Activated CD4-positive, alpha-beta memory T cell treated with anti-CD3 and anti-CD28 coated beads for 36 hours (primary cell): ENCODE measurements at regions of chr5 and their contacts with region 1.

Region 1: DNA sequence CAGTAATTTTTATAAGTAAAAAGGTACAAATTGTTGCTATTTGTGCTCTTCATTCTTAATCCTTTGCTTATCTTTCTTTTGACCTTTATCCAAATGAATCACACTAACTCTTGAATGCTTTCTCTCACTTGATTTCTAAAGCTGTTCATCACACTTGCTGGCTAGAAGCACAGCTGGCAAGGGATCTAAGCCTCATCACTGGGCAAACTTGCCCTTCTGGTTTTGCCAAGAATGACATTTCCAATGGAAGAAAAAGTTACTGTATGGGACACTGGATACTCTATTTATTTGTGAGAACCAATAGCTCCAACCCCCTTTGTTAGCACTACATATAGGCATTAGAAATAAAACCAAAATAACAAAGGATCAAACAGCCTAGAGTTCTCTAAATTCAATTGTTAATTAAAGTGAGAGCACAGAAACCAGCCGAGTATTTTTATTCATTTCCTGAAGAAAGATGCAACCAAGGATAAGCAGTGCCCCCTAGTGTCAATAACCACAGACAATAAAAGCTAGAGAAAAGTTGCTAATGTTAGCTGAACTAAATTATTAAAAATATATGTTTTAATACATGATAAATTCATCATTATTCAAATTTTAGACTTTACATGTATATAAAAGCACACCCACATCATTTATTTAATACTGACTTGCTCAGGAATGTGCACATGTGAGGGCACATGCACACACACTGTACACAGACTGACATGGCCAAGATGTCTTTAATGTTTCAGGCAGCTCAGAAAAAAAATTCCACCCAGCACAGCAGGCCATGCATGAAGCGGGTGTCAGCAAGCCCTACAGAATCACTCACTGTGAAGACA is 59.8 kb upstream of the POU5F2 start:
- DNase-seq: no peak
- H3K4me3 Mint-ChIP-seq: no peak overlapping the region
- H3K27ac Mint-ChIP-seq: no peak overlapping the region
- H3K4me1 Mint-ChIP-seq: no peaks in the 10 kb centered on the region
- H3K27me3 Mint-ChIP-seq: no peaks in the 10 kb centered on the region

Region 2: GRCh38 chr5:91928754-91929521 is 1872.3 kb before region 1 on chr5:
- CTCF ChIA-PET with region 1: no interaction called
- POLR2A ChIA-PET with region 1: no interaction called
- intact Hi-C with region 1: loop called (anchors 5 kb)
- DNase-seq: no peak
- H3K4me3 Mint-ChIP-seq: no peak overlapping the region
- H3K27ac Mint-ChIP-seq: no peak overlapping the region
- H3K4me1 Mint-ChIP-seq: no peaks in the 10 kb centered on the region
- H3K27me3 Mint-ChIP-seq: no peaks in the 10 kb centered on the region

Region 3: GRCh38 chr5:93607367-93608258 is 193.6 kb before region 1 on chr5:
- CTCF ChIA-PET with region 1: interaction called, 37 read pairs
- POLR2A ChIA-PET with region 1: no interaction called
- intact Hi-C with region 1: loop called (anchors 1 kb)
- DNase-seq: no peak
- H3K4me3 Mint-ChIP-seq: peak overlapping the region; percentile 8
- H3K27ac Mint-ChIP-seq: no peak overlapping the region
- H3K4me1 Mint-ChIP-seq: peaks cover 18% of the 10 kb centered on the region
- H3K27me3 Mint-ChIP-seq: peaks cover 82% of the 10 kb centered on the region

Region 4: GRCh38 chr5:93620487-93621326 is 180.5 kb before region 1 on chr5:
- CTCF ChIA-PET with region 1: interaction called, 7 read pairs
- POLR2A ChIA-PET with region 1: no interaction called
- intact Hi-C with region 1: loop called (anchors 5 kb)
- DNase-seq: peak; percentile 67
- H3K4me3 Mint-ChIP-seq: peak overlapping the region; percentile 81
- H3K27ac Mint-ChIP-seq: peak overlapping the region; percentile 15
- H3K4me1 Mint-ChIP-seq: peaks cover 32% of the 10 kb centered on the region
- H3K27me3 Mint-ChIP-seq: peaks cover 19% of the 10 kb centered on the region

Region 5: GRCh38 chr5:93746406-93747056 is 54.7 kb before region 1 on chr5:
- CTCF ChIA-PET with region 1: no interaction called
- POLR2A ChIA-PET with region 1: no interaction called
- intact Hi-C with region 1: no loop called
- DNase-seq: no peak
- H3K4me3 Mint-ChIP-seq: no peak overlapping the region
- H3K27ac Mint-ChIP-seq: no peak overlapping the region
- H3K4me1 Mint-ChIP-seq: peaks cover 4% of the 10 kb centered on the region
- H3K27me3 Mint-ChIP-seq: no peaks in the 10 kb centered on the region

Region 6: DNA sequence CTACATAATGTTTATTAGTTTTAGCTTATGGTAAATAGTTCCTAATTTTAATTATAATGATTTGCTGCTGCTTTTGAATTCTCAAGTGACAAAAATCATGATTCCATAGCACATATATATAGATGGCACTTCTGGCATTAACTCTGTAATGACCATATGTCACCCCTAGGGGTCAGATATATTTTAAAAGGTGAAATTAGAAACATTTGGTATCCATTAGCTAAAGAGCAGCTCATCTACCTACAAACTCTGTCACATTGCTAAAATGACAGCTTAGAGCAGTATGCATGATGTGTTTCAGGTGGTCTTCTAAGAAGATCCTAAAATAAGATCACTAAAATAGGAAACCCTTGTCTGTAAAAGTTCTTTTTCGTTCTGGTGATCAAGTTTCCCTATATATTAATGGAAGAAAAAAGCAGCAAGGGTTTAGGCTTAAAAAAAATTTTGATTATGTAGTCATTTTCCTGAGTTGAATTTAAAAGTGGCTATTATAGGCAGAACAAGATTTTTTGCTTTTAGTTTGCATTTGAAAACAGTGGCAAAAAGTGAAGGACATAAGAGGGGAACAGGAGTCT is 97.9 kb after region 1 on chr5:
- CTCF ChIA-PET with region 1: no interaction called
- POLR2A ChIA-PET with region 1: no interaction called
- intact Hi-C with region 1: no loop called
- DNase-seq: no peak
- H3K4me3 Mint-ChIP-seq: no peak overlapping the region
- H3K27ac Mint-ChIP-seq: no peak overlapping the region
- H3K4me1 Mint-ChIP-seq: no peaks in the 10 kb centered on the region
- H3K27me3 Mint-ChIP-seq: no peaks in the 10 kb centered on the region

Region 7: DNA sequence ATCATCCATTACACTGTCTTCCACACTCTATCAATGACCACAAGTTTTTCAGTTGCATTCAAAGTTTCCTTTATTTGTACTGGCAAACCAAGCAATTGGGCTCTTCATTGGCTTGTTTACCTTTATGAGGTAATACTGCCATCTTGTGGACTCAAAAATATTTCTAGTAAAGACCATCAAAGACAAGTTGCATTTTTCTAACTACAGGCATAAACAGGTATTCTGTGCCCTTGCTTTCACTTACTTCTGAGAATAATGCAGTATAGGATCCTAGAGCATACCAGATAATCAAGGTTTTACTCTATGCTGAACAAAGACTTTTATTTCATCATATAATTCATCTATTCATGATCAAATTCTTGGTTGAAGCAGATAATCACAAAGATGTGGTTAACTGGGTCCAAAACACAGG is 113.9 kb after region 1 on chr5:
- CTCF ChIA-PET with region 1: interaction called, 4 read pairs
- POLR2A ChIA-PET with region 1: no interaction called
- intact Hi-C with region 1: loop called (anchors 2 kb)
- DNase-seq: no peak
- H3K4me3 Mint-ChIP-seq: no peak overlapping the region
- H3K27ac Mint-ChIP-seq: no peak overlapping the region
- H3K4me1 Mint-ChIP-seq: no peaks in the 10 kb centered on the region
- H3K27me3 Mint-ChIP-seq: no peaks in the 10 kb centered on the region

Region 8: GRCh38 chr5:94389515-94389899 is 588.3 kb after region 1 on chr5:
- CTCF ChIA-PET with region 1: no interaction called
- POLR2A ChIA-PET with region 1: no interaction called
- intact Hi-C with region 1: no loop called
- DNase-seq: no peak
- H3K4me3 Mint-ChIP-seq: no peak overlapping the region
- H3K27ac Mint-ChIP-seq: no peak overlapping the region
- H3K4me1 Mint-ChIP-seq: peaks cover 7% of the 10 kb centered on the region
- H3K27me3 Mint-ChIP-seq: no peaks in the 10 kb centered on the region